ENCODE measurements at regions of chr1 and their contacts with region 1.

Region 1: GRCh38 chr1:211514030-211514754 is 22.2 kb upstream of the RD3 start:
- DNase-seq: peak; percentile 82 to 89 (median 88)
- ATAC-seq: peak; percentile 91
- H3K4me3 ChIP-seq: no peak overlapping the region
- H3K27ac ChIP-seq: no peak overlapping the region
- H3K4me1 ChIP-seq: no peaks in the 10 kb centered on the region
- H3K27me3 ChIP-seq: no peaks in the 10 kb centered on the region

Region 2: GRCh38 chr1:211323156-211324063 is 190.8 kb before region 1 on chr1:
- intact Hi-C with region 1: loop called in 2 of 4 experiments (anchors 10 kb)
- DNase-seq: peak in 1 of 3 donors; percentile 57
- ATAC-seq: peak; percentile 46 to 56
- H3K4me3 ChIP-seq: no peak overlapping the region
- H3K27ac ChIP-seq: no peak overlapping the region
- H3K4me1 ChIP-seq: peaks cover 3% of the 10 kb centered on the region
- H3K27me3 ChIP-seq: no peaks in the 10 kb centered on the region

Region 3: GRCh38 chr1:211420389-211420788 is 93.8 kb before region 1 on chr1:
- intact Hi-C with region 1: no loop called
- DNase-seq: no peak
- ATAC-seq: no peak
- H3K4me3 ChIP-seq: no peak overlapping the region
- H3K27ac ChIP-seq: no peak overlapping the region
- H3K4me1 ChIP-seq: no peaks in the 10 kb centered on the region
- H3K27me3 ChIP-seq: no peaks in the 10 kb centered on the region

Region 4: DNA sequence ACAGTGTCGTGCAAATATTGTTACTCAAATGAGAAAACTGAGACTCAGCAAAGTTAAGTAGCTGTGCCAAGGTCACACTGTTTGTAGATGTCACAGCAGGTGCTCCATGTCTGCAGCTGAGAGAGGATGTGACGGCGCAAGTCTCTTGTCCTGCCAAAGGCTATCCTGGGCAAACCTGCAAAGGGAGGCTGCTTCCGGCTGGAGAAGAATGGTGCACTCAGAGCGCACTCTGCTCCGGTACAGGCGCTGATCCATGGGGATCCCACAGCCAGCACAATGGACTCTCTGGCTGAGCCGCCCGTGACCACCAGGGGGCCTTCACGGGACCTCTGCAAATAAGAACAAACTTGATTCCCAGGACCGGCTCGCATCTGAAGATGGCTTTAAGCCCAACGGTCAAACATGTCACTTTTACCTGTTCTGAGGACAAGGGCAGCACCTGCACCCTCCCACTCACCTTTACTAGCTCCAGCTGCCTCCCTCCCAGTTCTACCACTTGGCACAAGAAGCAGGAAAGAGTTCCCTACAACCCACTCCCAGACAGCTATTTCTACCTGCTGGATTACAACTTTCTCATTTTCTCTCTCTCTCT is 44.2 kb before region 1 on chr1:
- intact Hi-C with region 1: loop called in 2 of 4 experiments (anchors 2 to 5 kb)
- DNase-seq: peak; percentile 76 to 93 (median 90)
- ATAC-seq: peak; percentile 89 to 91
- H3K4me3 ChIP-seq: no peak overlapping the region
- H3K27ac ChIP-seq: no peak overlapping the region
- H3K4me1 ChIP-seq: peaks cover 2% of the 10 kb centered on the region
- H3K27me3 ChIP-seq: no peaks in the 10 kb centered on the region

Region 5: GRCh38 chr1:211476200-211476849 is 37.9 kb before region 1 on chr1:
- intact Hi-C with region 1: loop called in 2 of 4 experiments (anchors 2 to 5 kb)
- DNase-seq: peak; percentile 64 to 80 (median 68)
- ATAC-seq: peak; percentile 44 to 49
- H3K4me3 ChIP-seq: no peak overlapping the region
- H3K27ac ChIP-seq: no peak overlapping the region
- H3K4me1 ChIP-seq: no peaks in the 10 kb centered on the region
- H3K27me3 ChIP-seq: no peaks in the 10 kb centered on the region

Region 6: GRCh38 chr1:211654838-211655787 is 140.9 kb after region 1 on chr1:
- intact Hi-C with region 1: loop called in 3 of 4 experiments (anchors 2 to 5 kb)
- DNase-seq: peak; percentile 89 to 96 (median 96)
- ATAC-seq: peak; percentile 93 to 95
- H3K4me3 ChIP-seq: no peak overlapping the region
- H3K27ac ChIP-seq: no peak overlapping the region
- H3K4me1 ChIP-seq: no peaks in the 10 kb centered on the region
- H3K27me3 ChIP-seq: no peaks in the 10 kb centered on the region

Region 7: DNA sequence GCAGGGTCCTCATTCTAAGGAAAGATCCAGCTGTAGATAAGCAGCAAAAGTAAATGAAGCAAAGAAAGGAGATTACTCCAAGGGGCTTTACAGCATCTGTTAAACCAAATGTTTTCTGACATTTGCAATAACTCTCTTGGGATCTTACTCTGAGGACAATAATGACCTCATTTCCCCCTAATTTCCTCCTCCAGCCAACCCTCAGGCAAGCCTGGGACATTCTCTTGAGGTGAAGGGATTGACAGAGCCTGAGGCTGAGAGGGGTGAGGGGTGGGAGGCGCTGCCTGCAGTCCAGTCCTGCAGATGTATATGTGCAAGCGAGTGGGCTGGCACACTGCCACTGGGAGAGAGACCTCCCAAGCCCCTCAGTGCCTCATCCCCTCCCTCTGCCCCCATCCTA is 201.8 kb after region 1 on chr1:
- intact Hi-C with region 1: no loop called
- DNase-seq: no peak
- ATAC-seq: no peak
- H3K4me3 ChIP-seq: no peak overlapping the region
- H3K27ac ChIP-seq: no peak overlapping the region
- H3K4me1 ChIP-seq: no peaks in the 10 kb centered on the region
- H3K27me3 ChIP-seq: no peaks in the 10 kb centered on the region

Region 8: GRCh38 chr1:212007886-212008285 is 493.7 kb after region 1 on chr1:
- intact Hi-C with region 1: no loop called
- DNase-seq: no peak
- ATAC-seq: no peak
- H3K4me3 ChIP-seq: no peak overlapping the region
- H3K27ac ChIP-seq: no peak overlapping the region
- H3K4me1 ChIP-seq: no peaks in the 10 kb centered on the region
- H3K27me3 ChIP-seq: no peaks in the 10 kb centered on the region